A673 (cell line): ENCODE measurements at regions of chr16 and their contacts with region 1.

Region 1: DNA sequence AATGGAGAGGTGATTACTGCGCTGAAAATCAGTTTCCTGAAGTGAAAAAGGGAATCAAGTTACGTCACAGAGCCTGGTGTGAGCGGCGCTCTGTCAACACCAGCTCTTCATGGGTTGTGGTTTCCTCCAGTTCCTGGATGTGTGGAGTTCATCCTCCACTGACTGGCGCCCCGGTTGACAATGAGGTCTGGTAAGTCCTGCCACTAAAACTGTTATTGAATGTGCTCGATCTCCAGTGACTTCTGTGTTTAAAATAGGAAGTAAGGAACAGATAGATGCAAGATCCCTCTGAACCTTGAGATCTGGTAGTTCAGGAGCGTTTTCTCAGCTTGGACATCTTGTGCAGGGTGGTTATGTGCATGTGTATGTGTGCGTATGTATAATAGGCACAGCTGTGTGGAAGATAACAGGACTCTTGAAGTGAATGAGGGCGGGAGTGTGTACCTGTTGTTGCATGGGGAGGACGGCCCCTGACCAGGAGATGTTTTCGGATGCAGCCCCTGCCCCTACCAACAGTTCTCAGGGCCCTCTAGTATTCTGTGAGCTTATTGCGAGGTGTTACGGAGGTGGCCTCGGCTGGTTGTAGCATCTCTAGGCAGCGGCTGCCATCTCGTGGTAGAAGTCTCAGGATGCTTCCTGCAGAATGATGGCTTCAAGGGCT is 22.0 kb upstream of the GOT2 start:
- DNase-seq: peak; percentile 81
- H3K4me3 ChIP-seq: no peak overlapping the region
- H3K27ac ChIP-seq: no peak overlapping the region
- H3K4me1 ChIP-seq: no peaks in the 10 kb centered on the region
- H3K27me3 ChIP-seq: peaks cover 10% of the 10 kb centered on the region
- CTCF ChIP-seq: peak; percentile 81

Region 2: DNA sequence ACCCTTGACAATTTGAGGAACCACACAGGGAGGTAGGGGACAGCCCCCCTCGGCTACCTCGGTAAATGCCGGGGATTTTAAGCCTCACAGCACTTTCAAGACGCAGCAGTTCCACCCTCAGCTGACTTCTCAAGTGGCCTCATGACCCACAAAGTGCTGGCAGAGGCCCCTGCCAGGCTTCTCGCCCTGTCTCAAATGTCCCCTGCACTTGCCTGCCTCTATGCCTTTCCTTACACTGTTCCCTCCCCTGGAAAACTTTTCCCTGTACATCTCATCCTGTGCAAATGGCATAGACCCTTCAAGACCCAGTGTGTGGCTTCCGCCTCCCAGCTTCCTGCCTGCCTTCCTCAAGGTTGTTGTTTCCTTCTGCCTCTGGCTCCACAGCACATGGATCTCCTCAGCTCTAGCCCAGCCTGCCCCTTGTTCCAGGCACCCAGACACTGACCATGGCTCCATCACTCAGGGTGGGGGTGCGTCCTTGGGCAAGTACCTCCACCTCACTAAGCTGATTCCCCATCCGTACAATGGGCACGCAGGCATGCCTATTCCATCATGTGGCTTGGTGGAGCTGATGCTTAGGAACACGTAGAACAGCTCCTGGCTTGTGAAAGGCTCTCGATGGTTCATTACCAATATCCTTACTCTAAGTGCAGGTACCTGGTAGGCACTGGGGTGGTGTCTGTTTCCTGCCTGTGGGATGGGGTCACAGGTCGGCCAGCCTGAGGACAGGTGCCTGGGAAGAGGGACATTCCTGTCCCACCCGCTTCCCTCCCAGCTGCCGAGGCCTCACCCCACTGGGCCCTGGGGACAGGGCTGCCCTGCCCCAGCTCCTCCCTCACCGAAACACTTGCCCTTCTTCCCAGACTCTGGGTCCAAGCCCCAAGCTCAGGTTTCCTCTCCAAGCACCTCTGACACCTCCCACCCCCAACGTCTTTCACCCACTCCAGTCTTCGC is 706.6 kb before region 1 on chr16:
- CTCF ChIA-PET with region 1: no interaction called
- POLR2A ChIA-PET with region 1: no interaction called
- intact Hi-C with region 1: loop called (anchors 10 kb)
- DNase-seq: no peak
- H3K4me3 ChIP-seq: no peak overlapping the region
- H3K27ac ChIP-seq: no peak overlapping the region
- H3K4me1 ChIP-seq: no peaks in the 10 kb centered on the region
- H3K27me3 ChIP-seq: no peaks in the 10 kb centered on the region
- CTCF ChIP-seq: no peak

Region 3: DNA sequence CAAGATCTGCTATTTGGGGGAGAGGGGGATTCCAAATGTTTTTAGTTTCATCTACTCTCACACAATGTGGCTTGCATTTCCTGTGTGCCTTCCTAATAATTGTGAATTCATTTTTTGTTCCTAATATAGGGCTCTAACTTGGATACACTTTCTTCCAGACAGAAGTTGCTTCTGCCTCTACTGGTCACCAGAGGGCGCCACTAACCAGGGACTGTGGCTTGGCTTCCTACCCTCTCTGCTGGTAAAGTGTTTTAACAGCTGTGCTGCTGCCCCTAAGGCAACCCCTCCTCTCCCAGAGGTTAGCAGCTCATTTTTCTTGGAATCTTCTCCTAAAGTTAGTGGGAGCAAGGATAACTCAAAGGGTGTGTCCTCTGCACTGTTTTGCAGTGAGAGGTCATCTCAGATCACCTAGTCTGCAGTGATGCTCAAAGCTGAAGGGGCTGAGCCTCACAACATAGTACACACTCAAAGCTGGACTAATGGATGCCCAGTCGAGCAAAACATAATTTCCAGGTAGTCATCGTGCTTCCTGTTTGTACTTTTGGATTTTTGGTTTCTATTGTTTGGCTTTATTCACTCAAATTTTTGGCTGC is 456.3 kb before region 1 on chr16:
- CTCF ChIA-PET with region 1: interaction called, 12 read pairs
- POLR2A ChIA-PET with region 1: no interaction called
- intact Hi-C with region 1: no loop called
- DNase-seq: peak; percentile 50
- H3K4me3 ChIP-seq: no peak overlapping the region
- H3K27ac ChIP-seq: no peak overlapping the region
- H3K4me1 ChIP-seq: no peaks in the 10 kb centered on the region
- H3K27me3 ChIP-seq: no peaks in the 10 kb centered on the region
- CTCF ChIP-seq: peak; percentile 75

Region 4: DNA sequence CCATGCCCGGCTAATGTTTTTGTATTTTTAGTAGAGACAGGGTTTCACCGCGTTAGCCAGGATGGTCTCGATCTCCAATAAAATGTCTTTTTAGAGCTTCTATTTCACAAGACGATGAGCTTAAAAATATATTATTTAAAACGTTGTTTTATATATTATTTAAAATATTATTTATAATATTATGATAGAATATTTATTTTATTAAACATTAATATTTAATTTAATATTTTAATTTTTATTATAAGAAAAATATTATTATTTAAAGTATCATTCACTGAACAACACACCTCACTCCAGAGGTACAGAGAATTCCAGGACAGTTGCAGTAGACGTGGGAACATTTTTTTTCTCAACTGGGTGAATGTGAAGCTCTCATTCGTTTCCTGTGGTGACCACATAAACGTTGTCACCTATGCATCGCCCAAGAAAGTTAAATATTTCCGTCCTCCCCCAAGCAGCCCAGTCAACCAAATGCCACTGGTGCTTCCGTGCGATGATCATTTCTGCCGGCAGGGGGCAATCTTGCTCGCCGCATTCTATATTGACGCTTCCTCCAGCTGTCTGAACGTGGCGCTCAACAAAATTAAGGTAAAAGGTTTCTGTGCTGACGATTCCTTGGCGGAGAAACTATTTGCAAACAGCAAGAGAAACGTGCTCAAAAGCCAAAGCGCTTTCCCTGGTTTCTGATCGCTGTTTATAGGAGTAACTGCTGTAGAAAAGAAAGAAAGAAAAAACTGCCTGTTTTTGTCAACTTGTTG is 419.6 kb before region 1 on chr16:
- CTCF ChIA-PET with region 1: interaction called, 10 read pairs
- POLR2A ChIA-PET with region 1: no interaction called
- intact Hi-C with region 1: loop called (anchors 2 kb)
- DNase-seq: peak; percentile 83
- H3K4me3 ChIP-seq: peak overlapping the region; percentile 28
- H3K27ac ChIP-seq: no peak overlapping the region
- H3K4me1 ChIP-seq: peaks cover 5% of the 10 kb centered on the region
- H3K27me3 ChIP-seq: no peaks in the 10 kb centered on the region
- CTCF ChIP-seq: peak; percentile 96

Region 5: GRCh38 chr16:58494981-58495520 is 261.1 kb before region 1 on chr16:
- CTCF ChIA-PET with region 1: interaction called, 10 read pairs
- POLR2A ChIA-PET with region 1: no interaction called
- intact Hi-C with region 1: loop called (anchors 5 kb)
- DNase-seq: peak; percentile 92
- H3K4me3 ChIP-seq: no peak overlapping the region
- H3K27ac ChIP-seq: no peak overlapping the region
- H3K4me1 ChIP-seq: no peaks in the 10 kb centered on the region
- H3K27me3 ChIP-seq: no peaks in the 10 kb centered on the region
- CTCF ChIP-seq: peak; percentile 61

Region 6: DNA sequence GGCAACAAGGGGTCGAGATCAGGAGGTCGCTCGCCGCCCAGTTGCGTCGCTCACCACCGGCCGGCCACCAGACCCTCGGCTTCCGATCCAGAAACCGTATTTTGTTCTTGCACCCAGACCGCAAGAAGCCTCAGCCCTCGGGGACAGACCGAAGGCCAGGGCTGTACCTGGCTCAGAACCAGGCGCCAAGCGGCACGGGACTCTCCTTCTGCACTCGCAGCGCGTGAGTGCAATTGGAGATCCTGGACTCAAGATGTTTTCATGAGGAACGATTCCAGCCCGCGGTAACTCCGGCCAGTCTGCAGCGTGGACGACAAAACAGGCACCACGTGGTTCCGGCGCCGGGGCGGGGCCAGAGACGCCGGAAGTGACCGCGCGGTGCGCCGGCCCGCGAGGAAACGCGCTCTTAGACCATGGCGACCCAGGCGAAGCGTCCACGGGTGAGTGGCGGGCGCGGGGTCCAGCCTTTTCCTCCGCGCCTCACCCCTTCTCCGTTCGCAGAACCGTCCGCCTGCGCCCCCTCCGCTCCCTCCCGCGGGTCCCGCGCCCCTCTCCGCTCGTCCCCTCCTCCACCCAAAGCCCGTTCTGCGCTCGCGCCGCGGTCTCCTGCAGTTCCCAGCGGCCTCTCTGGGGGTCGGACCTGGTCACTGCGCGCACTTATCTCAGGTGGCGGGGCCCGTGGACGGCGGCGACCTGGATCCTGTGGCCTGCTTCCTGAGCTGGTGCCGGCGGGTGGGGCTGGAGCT is 240.8 kb before region 1 on chr16 and contains the start of gene SETD6:
- CTCF ChIA-PET with region 1: interaction called, 13 read pairs
- POLR2A ChIA-PET with region 1: no interaction called
- intact Hi-C with region 1: loop called (anchors 2 kb)
- DNase-seq: peak; percentile 86
- H3K4me3 ChIP-seq: peak within 1 kb of the TSS; percentile 80
- H3K27ac ChIP-seq: peak within 1 kb of the TSS; percentile 73
- H3K4me1 ChIP-seq: peaks cover 8% of the 10 kb centered on the region
- H3K27me3 ChIP-seq: no peaks in the 10 kb centered on the region
- CTCF ChIP-seq: no peak
- total RNA-seq, gene SETD6: 35.2 and 36.1 TPM in 2 replicates